AG04450 (cell line): ENCODE measurements at regions of chr2 and their contacts with region 1.

Region 1: DNA sequence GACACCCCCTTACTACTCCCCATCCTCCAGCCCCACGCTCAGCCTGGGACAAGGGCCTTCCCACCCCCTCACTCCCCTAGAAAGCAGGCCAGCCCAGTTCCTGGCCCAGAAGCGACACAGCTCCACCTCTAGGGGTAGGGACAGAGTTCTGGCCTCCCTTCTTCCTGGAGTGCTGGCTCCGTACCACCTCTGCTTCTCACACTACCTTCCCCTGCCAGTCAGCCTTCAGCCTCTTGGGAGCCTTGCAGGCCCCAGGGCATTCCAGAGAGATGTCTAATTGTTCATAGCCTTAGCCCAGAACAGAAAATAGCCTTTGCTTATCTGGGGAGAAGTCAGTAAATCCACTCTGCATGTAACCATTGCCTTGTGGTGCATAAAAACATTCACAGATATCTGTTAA is 13.1 kb upstream of the CATIP start:
- DNase-seq: no peak
- H3K4me3 ChIP-seq: no peak overlapping the region
- H3K27ac ChIP-seq: no peak overlapping the region
- H3K27me3 ChIP-seq: no peaks in the 10 kb centered on the region
- CTCF ChIP-seq: no peak

Region 2: DNA sequence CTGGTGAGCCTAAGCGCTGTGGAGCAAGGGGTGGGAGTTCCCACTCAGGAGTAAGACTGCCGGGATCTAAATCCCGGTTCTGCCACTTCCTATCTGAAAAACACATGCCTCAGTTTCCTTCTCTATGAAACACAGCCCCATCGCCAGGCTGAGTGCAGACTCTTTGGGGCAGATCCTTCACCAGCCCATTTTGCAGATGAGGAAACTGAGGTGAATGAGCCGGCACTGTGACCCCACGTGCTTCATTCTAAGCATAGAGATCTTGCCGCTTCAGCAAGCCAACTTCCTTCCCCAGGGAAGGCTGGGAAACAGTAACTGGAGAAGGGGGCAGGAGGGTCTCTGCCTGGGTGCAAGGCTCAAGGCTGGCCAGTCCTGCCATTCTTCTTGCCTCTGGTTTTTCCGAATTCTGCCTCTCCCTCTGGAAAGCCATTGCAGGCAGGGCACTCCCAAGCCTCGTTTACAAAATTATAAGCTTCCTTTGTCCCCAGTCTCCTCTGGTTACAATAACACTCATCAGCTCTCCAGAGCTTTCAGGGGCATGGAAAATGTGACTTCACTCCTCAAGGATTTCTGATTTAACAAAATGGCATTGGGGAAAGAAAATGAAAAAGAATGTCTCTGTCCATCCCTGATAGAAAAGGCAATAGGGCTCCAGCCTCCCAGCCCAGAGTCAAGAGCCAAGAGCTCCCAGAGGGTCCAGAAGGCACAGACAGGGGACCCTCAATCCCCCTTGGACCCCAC is 590.0 kb before region 1 on chr2:
- CTCF ChIA-PET with region 1: no interaction called
- POLR2A ChIA-PET with region 1: no interaction called
- DNase-seq: no peak
- H3K4me3 ChIP-seq: no peak overlapping the region
- H3K27ac ChIP-seq: peak overlapping the region; percentile 21
- H3K27me3 ChIP-seq: peaks cover 6% of the 10 kb centered on the region
- CTCF ChIP-seq: no peak

Region 3: DNA sequence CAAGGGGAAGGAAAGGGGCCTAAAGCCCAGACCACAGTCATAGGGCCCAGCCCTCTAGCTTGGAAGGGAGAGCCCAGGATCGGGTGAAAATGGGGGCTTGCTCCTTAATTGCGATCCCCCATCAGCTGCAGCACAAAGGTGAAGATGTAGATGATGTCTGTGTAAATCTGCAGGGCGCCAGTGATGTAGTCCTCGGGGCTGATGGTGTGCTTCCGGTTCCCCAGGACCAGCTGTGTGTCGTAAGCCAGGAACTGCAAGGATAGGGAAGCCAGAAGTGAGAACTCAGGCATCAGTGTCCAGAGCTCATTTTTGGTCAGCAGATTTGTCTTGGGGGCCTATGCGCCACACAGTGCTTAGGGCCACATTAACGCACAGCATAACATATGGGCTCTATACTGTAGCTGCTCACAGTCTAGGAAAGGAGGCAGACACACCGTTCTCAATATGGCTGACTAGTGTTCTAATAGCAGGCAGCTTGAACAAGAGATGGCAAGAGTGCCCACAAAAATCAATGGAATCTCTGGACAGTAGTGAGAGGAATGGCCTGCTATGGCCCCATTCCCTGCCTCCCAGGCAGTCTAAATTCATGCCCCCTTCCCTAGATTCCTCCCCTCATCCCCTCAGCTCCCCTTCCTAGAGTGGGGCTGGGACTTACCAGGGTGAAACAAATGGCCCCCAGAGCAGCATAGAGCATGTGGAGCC is 68.1 kb before region 1 on chr2:
- CTCF ChIA-PET with region 1: interaction called, 13 read pairs
- POLR2A ChIA-PET with region 1: no interaction called
- DNase-seq: no peak
- H3K4me3 ChIP-seq: no peak overlapping the region
- H3K27ac ChIP-seq: no peak overlapping the region
- H3K27me3 ChIP-seq: no peaks in the 10 kb centered on the region
- CTCF ChIP-seq: no peak

Region 4: DNA sequence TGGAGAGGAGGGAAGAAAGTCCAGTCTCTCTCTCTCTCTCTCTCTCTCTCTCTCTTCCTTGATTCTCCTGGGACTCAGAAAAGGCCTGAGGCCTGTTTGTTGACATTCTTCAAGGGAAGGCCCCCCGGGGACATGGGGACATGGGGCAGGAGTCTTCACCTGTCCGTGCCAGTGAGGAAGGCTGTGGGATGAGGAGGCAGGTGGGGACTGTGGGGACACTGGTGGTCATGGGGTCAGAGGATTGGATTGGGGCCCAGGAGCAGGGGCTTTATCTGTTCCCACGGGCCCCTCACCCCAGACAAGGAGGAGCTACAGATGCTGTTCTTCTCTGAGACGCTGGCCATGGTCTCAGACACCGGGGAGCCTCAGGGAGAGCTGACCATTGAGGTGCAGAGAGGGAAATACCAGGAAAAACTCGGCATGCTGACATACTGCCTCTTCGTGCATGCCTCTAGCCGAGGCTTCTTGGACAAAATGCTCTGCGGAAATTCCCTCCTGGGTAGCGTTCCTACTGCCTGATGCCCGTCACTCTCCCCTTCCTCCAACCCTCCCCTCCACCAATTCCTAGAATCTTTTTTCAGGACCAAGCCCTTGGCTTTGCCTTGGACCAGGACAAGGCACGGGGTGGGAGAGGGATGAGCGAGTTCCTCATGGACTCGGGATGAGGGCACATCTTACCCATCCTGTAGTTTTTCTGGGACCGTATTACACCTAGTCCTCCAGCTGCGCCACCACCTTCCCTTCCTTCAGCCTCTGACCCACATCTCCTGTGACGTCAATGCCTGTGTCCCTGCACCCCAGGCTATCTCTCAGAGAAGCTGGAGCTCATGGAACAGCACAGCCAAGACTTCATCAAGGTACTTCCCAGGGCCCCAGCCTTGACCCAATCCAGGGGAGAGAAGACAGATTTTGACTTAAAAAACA is 13.9 kb after region 1 on chr2:
- CTCF ChIA-PET with region 1: interaction called, 10 read pairs
- POLR2A ChIA-PET with region 1: no interaction called
- DNase-seq: no peak
- H3K4me3 ChIP-seq: no peak overlapping the region
- H3K27ac ChIP-seq: no peak overlapping the region
- H3K27me3 ChIP-seq: no peaks in the 10 kb centered on the region
- CTCF ChIP-seq: no peak